ENCODE measurements at regions of chr11 and their contacts with region 1.

Region 1: GRCh38 chr11:61733120-61733978 is 19.1 kb upstream of the MYRF start:
- DNase-seq: peak; percentile 81 to 95
- ATAC-seq: peak; percentile 69 to 89
- H3K4me3 ChIP-seq: no peak overlapping the region
- H3K27ac ChIP-seq: 0 out of 6 replicates have a peak overlapping the region, but pooled peaks of 1 of the 2 experiments have one; percentile 41
- H3K4me1 ChIP-seq: peaks cover 27% of the 10 kb centered on the region
- CTCF ChIP-seq: peak; percentile 94
- EP300 ChIP-seq: no peak
- POLR2A ChIP-seq: no peak
- RAD21 ChIP-seq: peak; percentile 93 to 97

Region 2: DNA sequence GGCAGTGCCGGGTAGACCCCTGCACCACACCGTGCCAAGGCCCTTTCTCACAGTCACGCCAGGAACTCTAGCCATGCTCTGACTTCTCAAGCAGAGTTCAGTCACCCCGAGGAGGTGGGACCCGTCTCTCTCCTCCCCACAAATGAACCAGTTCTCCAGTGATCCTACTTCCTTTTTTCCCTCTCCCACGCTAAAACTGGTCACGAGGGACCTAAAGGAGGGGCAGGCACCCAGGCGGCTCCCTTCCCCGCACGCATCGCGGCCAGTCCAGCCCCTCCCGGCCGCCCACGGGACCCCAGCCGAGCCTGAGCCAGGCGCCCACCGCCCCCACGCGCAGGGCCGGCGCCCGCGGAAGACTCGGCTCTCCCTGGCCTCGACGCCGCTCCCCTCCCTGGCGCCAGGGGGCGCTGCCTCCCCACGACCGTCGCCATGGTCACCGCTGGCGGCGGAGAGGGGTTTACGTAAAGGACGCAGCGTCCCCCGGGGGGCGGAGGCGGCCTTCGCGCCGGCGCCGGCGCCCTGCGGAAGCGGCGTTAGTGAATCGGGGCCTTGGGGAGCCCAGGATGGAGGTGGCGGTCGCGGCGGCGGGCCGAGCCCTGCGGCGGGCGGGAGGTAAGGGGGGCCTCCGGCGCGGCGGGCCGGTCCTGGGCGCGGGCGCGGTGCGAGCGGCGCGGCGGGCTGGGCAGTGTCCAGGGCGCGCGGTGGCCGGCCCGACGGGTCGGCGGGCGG is 53.3 kb before region 1 on chr11 and contains the start of gene DAGLA:
- CTCF ChIA-PET with region 1: interaction called, 23 read pairs
- POLR2A ChIA-PET with region 1: no interaction called
- DNase-seq: peak; percentile 66 to 68
- ATAC-seq: peak; percentile 62 to 81
- H3K4me3 ChIP-seq: peak within 1 kb of the TSS; percentile 61
- H3K27ac ChIP-seq: peak within 1 kb of the TSS; percentile 73 to 96
- H3K4me1 ChIP-seq: peaks cover 29% of the 10 kb centered on the region
- CTCF ChIP-seq: peak; percentile 93
- EP300 ChIP-seq: no peak
- POLR2A ChIP-seq: peak; percentile 26
- RAD21 ChIP-seq: peak; percentile 71 to 75
- polyA plus RNA-seq, gene DAGLA: 0.93 and 1.2 TPM in 2 replicates

Region 3: GRCh38 chr11:61695917-61696316 is 37.4 kb before region 1 on chr11:
- CTCF ChIA-PET with region 1: interaction called, 15 read pairs
- POLR2A ChIA-PET with region 1: interaction called, 3 read pairs
- DNase-seq: peak; percentile 74 to 83
- ATAC-seq: peak; percentile 55 to 75
- H3K4me3 ChIP-seq: no peak overlapping the region; the same call in 2 of the 3 replicates
- H3K27ac ChIP-seq: peak overlapping the region; percentile 75 to 88
- H3K4me1 ChIP-seq: peaks cover 75% of the 10 kb centered on the region
- CTCF ChIP-seq: no peak
- EP300 ChIP-seq: no peak
- POLR2A ChIP-seq: no peak
- RAD21 ChIP-seq: no peak

Region 4: GRCh38 chr11:61711498-61711897 is 21.9 kb before region 1 on chr11:
- CTCF ChIA-PET with region 1: interaction called, 27 read pairs
- POLR2A ChIA-PET with region 1: no interaction called
- DNase-seq: no peak
- ATAC-seq: no peak
- H3K4me3 ChIP-seq: no peak overlapping the region
- H3K27ac ChIP-seq: no peak overlapping the region
- H3K4me1 ChIP-seq: peaks cover 7% of the 10 kb centered on the region
- CTCF ChIP-seq: no peak
- EP300 ChIP-seq: no peak
- POLR2A ChIP-seq: no peak
- RAD21 ChIP-seq: no peak

Region 5: GRCh38 chr11:61747192-61747966 is 14.0 kb after region 1 on chr11:
- CTCF ChIA-PET with region 1: interaction called, 156 read pairs
- POLR2A ChIA-PET with region 1: no interaction called
- DNase-seq: peak; percentile 78 to 79
- ATAC-seq: peak; percentile 76 to 93
- H3K4me3 ChIP-seq: no peak overlapping the region
- H3K27ac ChIP-seq: peak overlapping the region; percentile 40 to 70; a peak in 5 of 6 replicates
- H3K4me1 ChIP-seq: peaks cover 14% of the 10 kb centered on the region
- CTCF ChIP-seq: peak; percentile 89
- EP300 ChIP-seq: no peak
- POLR2A ChIP-seq: no peak
- RAD21 ChIP-seq: peak; percentile 88 to 91

Measured in A549 (cell line).